ENCODE measurements at regions of chr17 and their contacts with region 1.

Region 1: DNA sequence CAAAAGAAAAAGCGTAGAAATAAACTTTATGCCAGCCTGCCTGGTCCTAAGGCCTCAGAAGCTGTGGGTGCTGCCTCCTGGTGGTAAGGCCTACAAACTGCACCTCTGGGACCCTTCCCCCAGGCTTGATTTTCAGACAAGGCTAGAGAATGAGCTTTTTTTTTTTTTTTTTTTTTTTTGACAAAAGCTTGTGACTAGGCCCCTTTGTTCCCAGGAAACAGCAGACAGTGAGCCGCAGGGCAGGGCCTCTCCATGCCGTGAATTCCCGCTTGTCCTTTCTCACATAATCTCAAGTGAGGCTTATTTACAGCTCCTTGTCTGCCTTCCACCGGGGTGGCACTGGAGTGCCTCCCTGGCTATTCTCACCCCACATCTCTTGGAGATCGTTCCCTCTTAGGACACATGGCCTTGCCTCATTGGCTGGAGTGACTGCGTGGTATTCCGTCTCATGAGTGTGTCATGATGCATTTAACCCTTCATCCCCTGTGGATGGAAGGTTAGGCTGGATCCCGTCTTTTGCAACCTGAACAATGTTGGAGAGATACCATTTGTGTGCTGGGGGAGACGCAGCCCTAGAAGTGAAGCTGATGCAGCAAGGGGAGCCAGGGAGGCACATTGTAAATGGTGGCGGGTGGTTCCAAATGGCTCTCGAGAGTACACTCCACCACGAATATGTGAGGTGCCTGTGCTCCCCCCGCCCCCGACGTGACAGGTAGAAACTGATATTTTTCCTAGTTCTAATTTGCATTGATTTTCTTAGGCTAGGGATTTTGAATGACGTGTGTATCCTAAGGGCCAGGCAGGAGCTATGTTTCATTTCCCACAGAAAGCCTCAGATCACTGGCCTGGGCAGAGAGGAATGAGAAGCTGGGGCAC is 49.6 kb downstream of the USP22 start:
- DNase-seq: peak; percentile 73
- H3K4me3 Mint-ChIP-seq: peak overlapping the region; percentile 50
- H3K27ac Mint-ChIP-seq: no peak overlapping the region
- H3K4me1 Mint-ChIP-seq: peaks cover 4% of the 10 kb centered on the region
- H3K27me3 Mint-ChIP-seq: no peaks in the 10 kb centered on the region
- CTCF ChIP-seq: peak; percentile 86

Region 2: DNA sequence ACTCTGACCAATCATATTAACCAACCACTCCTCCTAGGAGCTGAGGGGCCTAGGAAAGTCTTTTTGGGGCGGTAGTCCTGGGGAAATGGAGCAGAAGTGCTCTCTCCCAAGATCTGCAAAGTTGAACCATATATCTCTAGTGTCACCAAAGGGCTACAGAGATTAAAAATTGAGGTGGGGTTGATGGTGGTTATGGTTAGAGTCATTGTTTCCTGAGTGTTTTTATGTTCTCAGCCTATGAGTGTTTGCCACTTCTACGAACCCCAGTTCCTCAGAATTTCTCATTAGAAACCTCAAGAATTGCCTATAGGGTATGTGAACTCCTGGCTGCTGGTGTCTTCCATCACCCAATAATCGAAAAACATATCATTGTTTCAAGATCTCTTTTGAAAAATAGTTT is 195.9 kb before region 1 on chr17:
- CTCF ChIA-PET with region 1: interaction called, 16 read pairs
- POLR2A ChIA-PET with region 1: interaction called, 4 read pairs
- intact Hi-C with region 1: loop called (anchors 1 kb)
- DNase-seq: no peak
- H3K4me3 Mint-ChIP-seq: no peak overlapping the region
- H3K27ac Mint-ChIP-seq: no peak overlapping the region
- H3K4me1 Mint-ChIP-seq: no peaks in the 10 kb centered on the region
- H3K27me3 Mint-ChIP-seq: no peaks in the 10 kb centered on the region
- CTCF ChIP-seq: no peak

Region 3: DNA sequence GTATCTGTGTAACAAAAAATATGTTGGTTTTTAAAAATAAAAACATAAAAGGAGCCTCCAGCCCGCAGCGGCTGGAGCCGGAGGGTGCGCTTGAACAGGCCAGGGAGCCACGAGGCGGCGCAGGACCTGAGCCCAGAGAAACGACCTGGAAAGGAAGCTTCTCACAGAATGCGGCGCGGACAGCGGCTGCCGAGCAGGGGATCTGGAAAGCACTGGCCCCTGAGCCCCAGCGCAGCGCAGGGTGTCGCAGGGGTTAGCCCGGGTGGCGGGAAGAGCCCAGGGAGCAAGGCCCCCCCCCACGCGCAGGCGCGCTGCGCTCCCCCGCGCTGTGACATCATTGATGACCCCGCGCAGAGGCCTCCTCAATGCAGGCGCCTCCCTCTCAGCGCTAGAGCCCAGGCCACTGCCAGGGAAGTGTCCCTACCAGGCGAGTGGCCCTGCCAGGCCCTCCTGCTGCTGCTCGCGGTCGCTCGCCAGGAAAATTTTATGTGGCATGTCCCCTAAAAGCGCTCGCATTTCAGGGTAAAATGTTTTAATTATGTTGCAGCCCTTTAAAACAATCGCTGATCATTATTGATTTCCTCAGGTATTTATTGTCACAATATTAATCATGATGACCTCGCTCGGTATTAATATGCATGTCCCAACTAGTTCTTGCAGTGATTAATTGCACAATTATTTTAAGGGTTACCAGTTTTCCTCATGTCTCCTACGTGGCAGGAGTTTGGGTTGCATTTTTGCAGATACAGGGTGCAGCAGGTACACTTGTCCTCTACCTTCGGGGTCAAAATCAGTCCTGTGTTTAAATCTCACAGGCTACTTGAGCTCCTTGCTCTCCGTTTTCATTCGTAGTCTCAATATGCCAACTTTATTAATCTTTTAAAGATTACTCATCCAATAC is 84.6 kb before region 1 on chr17:
- CTCF ChIA-PET with region 1: interaction called, 5 read pairs
- POLR2A ChIA-PET with region 1: no interaction called
- intact Hi-C with region 1: loop called (anchors 1 kb)
- DNase-seq: peak; percentile 79
- H3K4me3 Mint-ChIP-seq: peak overlapping the region; percentile 73
- H3K27ac Mint-ChIP-seq: peak overlapping the region; percentile 51
- H3K4me1 Mint-ChIP-seq: peaks cover 10% of the 10 kb centered on the region
- H3K27me3 Mint-ChIP-seq: no peaks in the 10 kb centered on the region
- CTCF ChIP-seq: peak; percentile 60

Region 4: DNA sequence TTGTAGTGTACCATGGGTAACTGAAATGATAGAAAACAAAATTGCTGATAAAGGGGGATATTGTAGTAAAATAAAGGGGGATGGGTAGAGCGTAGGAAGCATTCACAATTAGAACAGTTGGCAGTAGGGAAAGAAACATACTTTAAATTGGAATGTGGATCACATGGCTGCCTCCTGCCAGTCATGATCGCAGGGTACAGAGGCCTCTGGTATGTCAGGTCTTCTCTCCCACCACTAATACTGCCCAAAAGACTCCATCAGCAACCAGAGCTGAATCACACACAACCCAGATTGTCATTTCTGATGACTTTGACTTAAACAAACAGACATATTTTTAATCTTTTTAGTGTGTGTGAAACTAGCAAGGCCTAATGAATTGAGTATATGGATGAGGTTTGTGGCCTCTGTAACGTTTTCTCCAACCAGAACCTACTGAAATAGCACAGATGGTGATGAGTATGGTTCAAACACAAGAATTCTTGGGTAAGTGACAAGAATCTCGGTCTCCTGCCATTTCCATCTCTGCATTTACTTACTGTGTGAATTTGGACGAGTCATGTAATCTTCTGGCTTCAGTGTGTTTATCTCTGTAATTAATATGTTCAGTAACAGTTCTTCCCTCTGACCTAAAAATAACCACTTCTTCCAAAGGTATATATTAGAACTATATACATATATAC is 63.0 kb before region 1 on chr17:
- CTCF ChIA-PET with region 1: no interaction called
- POLR2A ChIA-PET with region 1: no interaction called
- intact Hi-C with region 1: no loop called
- DNase-seq: no peak
- H3K4me3 Mint-ChIP-seq: no peak overlapping the region
- H3K27ac Mint-ChIP-seq: no peak overlapping the region
- H3K4me1 Mint-ChIP-seq: peaks cover 7% of the 10 kb centered on the region
- H3K27me3 Mint-ChIP-seq: no peaks in the 10 kb centered on the region
- CTCF ChIP-seq: no peak

Region 5: DNA sequence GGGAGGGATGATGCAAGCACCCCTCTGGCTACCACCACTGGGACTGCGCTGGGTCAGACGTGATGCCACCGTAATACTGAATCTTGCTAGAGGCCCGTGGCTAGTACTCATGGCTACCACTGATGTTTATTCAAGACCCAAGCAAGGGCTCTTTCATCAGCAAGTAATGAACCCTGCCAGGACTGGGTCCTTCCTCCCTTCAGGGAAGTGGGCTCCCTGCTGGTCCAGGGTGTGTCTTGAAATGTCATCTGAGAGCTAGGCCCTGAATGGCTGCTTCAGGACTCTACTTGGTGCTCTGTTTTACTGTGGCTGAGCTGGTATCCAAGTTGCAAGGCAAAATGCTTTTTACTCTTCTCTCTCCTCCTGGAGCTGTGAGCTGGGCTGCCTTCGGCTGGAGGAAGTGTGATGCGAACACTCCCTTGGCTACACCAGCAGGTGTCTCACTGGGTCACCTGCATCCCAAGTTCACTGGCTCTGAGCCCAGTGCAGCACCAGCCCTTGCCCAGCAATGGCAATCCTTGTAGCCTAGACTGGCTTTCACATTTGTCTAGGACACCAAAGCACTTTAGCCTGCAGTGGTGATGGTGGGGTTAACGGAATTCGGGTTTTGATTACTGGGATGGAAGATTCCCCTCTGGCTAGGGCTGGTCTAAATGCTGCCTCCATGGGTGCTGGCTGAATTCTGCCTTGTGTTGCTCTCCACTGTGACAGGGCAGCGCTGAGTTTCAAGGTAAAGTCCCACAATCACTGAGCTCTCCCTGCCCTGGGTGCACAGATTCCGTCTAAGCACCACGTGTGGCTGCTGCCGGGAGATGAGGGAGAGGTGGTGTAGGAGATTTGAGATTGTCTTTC is 49.0 kb before region 1 on chr17:
- CTCF ChIA-PET with region 1: interaction called, 81 read pairs
- POLR2A ChIA-PET with region 1: interaction called, 3 read pairs
- intact Hi-C with region 1: loop called (anchors 1 kb)
- DNase-seq: peak; percentile 69
- H3K4me3 Mint-ChIP-seq: no peak overlapping the region
- H3K27ac Mint-ChIP-seq: peak overlapping the region; percentile 27
- H3K4me1 Mint-ChIP-seq: peaks cover 12% of the 10 kb centered on the region
- H3K27me3 Mint-ChIP-seq: no peaks in the 10 kb centered on the region
- CTCF ChIP-seq: peak; percentile 65

Region 6: DNA sequence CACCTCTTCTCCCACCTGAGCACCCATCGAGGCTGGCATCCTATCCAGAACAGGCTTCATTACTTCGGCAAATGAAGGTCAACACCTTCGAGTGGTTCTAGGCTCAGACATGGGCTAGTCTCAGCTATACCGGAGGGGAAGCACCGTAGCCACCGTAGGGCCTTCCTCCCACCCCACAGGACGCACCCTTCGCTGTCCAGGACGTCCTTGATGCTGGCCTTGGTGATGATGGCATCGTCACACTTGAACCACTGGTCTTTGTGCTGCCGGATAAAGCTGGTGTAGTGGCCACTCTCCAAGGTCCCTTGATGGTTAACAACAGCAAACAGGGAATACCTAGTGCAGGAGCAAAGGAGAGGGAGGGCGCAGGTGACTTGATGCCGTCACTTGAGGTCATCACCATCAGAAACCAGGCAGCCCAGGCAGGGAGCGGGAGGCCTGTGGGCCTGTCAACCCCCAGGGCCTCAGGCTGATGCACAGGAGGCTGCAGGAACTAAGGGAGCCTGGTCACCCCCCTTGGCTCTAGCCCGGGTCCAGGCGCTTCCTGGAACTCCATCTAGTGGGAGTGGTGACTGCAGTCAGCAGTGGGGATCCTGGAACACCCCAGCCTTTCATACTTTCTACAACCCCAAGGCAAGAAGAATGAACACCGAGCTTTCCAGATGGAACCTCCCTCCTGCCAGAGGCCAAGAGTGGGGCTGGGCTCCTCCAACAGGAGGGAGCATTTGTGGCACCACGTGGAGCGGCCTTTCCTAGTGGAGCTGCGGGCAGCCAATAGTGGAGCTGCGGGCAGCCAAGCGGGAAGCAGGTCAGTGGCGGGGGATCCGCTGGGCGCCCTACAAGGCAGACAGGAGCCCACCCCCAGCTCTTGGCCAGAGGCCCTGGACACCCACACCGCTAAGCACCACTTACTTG is 11.0 kb after region 1 on chr17:
- CTCF ChIA-PET with region 1: interaction called, 13 read pairs
- POLR2A ChIA-PET with region 1: no interaction called
- intact Hi-C with region 1: no loop called
- DNase-seq: no peak
- H3K4me3 Mint-ChIP-seq: no peak overlapping the region
- H3K27ac Mint-ChIP-seq: no peak overlapping the region
- H3K4me1 Mint-ChIP-seq: no peaks in the 10 kb centered on the region
- H3K27me3 Mint-ChIP-seq: no peaks in the 10 kb centered on the region
- CTCF ChIP-seq: no peak

Measured in MCF 10A (cell line).